Tibial artery (tissue), 4 donors: ENCODE measurements at regions of chr2 and their contacts with region 1.

Region 1: GRCh38 chr2:224357098-224357901 is 44.6 kb downstream of the FAM124B start:
- DNase-seq: peak in 1 of 2 donors; percentile 34
- H3K4me3 ChIP-seq: no peak overlapping the region
- H3K27ac ChIP-seq: no peak overlapping the region
- H3K4me1 ChIP-seq: no peaks in the 10 kb centered on the region
- H3K27me3 ChIP-seq: no peaks in the 10 kb centered on the region
- CTCF ChIP-seq: peak; percentile 74 to 91

Region 2: DNA sequence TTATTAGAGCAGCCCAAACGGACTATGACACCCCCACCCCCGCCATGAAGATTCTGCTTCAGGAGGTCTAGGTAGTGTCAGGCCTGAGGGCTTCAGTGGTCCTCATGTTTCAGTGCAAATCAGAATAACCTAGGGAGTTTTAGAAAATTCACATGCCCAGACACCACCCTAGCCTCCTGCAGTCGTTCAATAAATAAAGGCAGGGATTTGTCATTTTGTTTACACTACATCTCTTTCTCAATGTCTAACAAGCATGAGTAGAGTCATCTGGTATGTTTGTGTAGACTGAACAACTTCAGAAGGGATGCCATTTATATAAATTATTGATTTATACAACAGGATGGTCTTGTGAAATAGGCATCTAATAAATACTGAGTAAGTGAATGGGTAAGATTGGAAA is 206.1 kb before region 1 on chr2:
- intact Hi-C with region 1: no loop called
- DNase-seq: no peak
- H3K4me3 ChIP-seq: no peak overlapping the region
- H3K27ac ChIP-seq: no peak overlapping the region
- H3K4me1 ChIP-seq: no peaks in the 10 kb centered on the region
- H3K27me3 ChIP-seq: no peaks in the 10 kb centered on the region
- CTCF ChIP-seq: no peak

Region 3: DNA sequence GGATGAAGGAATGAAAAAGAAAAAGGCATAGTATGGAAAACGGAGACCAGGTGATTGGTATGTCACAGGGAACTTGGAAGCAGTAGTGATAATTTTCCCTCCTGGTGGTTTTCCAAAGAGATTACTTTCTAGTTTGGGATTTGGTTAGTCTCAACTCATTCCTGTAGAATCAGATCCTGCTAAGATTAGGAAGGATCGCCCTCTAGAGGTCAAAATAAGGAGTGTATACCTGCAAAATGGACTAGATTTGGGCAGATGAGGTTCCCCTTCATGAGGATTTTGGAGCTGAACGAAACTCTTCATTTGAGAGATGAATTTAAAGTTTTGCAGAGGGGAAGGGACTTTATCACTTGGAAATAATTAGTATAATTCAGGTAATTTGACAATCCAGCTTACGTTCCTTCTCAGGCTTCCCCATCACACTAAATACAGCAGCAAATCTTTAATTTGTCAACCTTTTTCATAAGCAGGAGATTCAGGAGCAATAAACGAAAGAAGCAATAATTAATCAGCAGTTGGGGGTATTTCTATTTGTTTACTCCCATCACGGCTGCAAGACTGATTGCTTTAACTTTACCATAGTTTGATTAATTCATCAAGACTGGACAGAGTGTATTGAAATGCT is 293.6 kb after region 1 on chr2:
- intact Hi-C with region 1: loop called (anchors 2 kb)
- DNase-seq: no peak
- H3K4me3 ChIP-seq: no peak overlapping the region
- H3K27ac ChIP-seq: no peak overlapping the region
- H3K4me1 ChIP-seq: no peaks in the 10 kb centered on the region
- H3K27me3 ChIP-seq: no peaks in the 10 kb centered on the region
- CTCF ChIP-seq: peak; percentile 81 to 85

Region 4: GRCh38 chr2:225002039-225002655 is 644.8 kb after region 1 on chr2:
- intact Hi-C with region 1: loop called (anchors 5 kb)
- DNase-seq: peak in 1 of 2 donors; percentile 41
- H3K4me3 ChIP-seq: no peak overlapping the region
- H3K27ac ChIP-seq: peak overlapping the region in 1 of 2 donors; percentile 24
- H3K4me1 ChIP-seq: peaks cover 0 to 4% (median 3%) of the 10 kb centered on the region in 4 donors
- H3K27me3 ChIP-seq: no peaks in the 10 kb centered on the region
- CTCF ChIP-seq: peak; percentile 82 to 90